Activated CD4-positive, alpha-beta T cell treated with anti-CD3 and anti-CD28 coated beads, Interleukin-2, amount 10 ng/mL, durations not matched to agents 24 days and 14 days (primary cell): ENCODE measurements at regions of chr7 and their contacts with region 1.

Region 1: DNA sequence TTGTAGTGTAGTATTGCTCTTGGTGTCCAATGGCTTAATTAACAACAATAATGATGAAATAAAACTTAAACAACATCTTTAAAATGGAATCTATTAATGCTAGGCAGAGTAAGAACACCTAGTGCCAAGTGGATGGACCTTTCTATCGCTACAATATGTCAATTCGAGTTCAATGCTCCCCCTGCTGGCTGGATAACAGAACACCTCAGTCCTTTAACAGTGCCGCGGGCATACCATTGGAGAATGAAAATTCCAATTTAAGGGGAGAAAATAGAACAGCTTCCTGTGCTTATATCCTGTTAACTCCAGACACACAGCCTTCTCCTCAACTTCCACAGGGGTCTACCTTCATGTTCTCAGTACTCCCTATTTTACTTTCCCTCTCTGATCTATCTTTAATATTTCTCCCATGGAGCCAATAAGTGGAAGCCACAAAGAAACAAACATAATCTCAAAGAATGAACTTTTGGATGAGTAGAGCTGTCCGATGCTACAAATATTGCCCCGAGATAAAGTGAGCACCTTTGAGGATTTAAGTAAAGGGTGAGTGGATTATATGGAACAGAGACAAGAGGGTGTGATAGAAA is 41.4 kb downstream of the COL1A2 start:
- DNase-seq: peak; percentile 85
- H3K4me3 Mint-ChIP-seq: no peak overlapping the region
- H3K27ac Mint-ChIP-seq: no peak overlapping the region
- H3K4me1 Mint-ChIP-seq: no peaks in the 10 kb centered on the region
- H3K27me3 Mint-ChIP-seq: peaks cover 13% of the 10 kb centered on the region

Region 2: GRCh38 chr7:94289071-94289470 is 147.0 kb before region 1 on chr7:
- intact Hi-C with region 1: loop called (anchors 2 kb)
- DNase-seq: no peak
- H3K4me3 Mint-ChIP-seq: no peak overlapping the region
- H3K27ac Mint-ChIP-seq: no peak overlapping the region
- H3K4me1 Mint-ChIP-seq: no peaks in the 10 kb centered on the region
- H3K27me3 Mint-ChIP-seq: peaks cover 24% of the 10 kb centered on the region

Region 3: GRCh38 chr7:94481279-94481678 is 45.2 kb after region 1 on chr7:
- intact Hi-C with region 1: no loop called
- DNase-seq: no peak
- H3K4me3 Mint-ChIP-seq: no peak overlapping the region
- H3K27ac Mint-ChIP-seq: no peak overlapping the region
- H3K4me1 Mint-ChIP-seq: no peaks in the 10 kb centered on the region
- H3K27me3 Mint-ChIP-seq: peaks cover 16% of the 10 kb centered on the region